ENCODE measurements at regions of chr19 and their contacts with region 1.

Region 1: GRCh38 chr19:11673608-11674041 is 65.1 kb downstream of the ZNF823 start:
- DNase-seq: peak; percentile 72 to 81 (median 76)
- ATAC-seq: peak; percentile 88 to 97 (median 95)
- H3K4me3 ChIP-seq: peak overlapping the region; percentile 31 to 76 (median 57)
- H3K27ac ChIP-seq: peak overlapping the region in 8 of 12 donors; percentile 2 to 53 (median 30)
- H3K4me1 ChIP-seq: peaks cover 0 to 13% (median 6%) of the 10 kb centered on the region in 12 donors
- H3K27me3 ChIP-seq: peaks cover 0 to 3% (median 0%) of the 10 kb centered on the region in 9 donors
- CTCF ChIP-seq: peak; percentile 70 to 93 (median 82)
- POLR2A ChIP-seq: no peak

Region 2: DNA sequence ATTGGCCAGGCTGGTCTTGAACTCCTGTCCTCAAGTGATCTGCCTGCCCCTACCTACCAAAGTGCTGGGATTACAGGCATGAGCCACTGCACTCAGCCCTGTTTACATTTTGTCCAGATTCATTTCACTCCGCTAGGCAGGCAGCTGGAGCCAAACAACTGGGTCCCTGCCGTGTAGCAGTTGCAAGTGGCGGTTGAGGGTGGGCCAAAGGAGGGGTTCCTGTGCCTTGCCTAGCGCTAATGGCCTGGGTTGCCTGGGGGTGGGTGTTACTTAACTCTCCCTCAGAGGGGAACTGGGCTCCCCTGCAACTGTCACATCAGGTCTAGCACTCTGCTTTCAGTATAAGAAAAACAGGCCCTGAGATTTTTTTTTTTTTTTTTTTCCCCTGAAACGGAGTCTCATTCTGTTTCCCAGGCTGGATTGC is 103.6 kb before region 1 on chr19:
- intact Hi-C with region 1: no loop called
- DNase-seq: no peak
- ATAC-seq: no peak
- H3K4me3 ChIP-seq: no peak overlapping the region
- H3K27ac ChIP-seq: no peak overlapping the region
- H3K4me1 ChIP-seq: peaks cover 0 to 5% (median 0%) of the 10 kb centered on the region in 12 donors
- H3K27me3 ChIP-seq: no peaks in the 10 kb centered on the region
- CTCF ChIP-seq: no peak
- POLR2A ChIP-seq: no peak

Region 3: GRCh38 chr19:11745869-11746268 is 72.2 kb after region 1 on chr19:
- intact Hi-C with region 1: no loop called
- DNase-seq: no peak
- ATAC-seq: no peak
- H3K4me3 ChIP-seq: no peak overlapping the region
- H3K27ac ChIP-seq: no peak overlapping the region
- H3K4me1 ChIP-seq: no peaks in the 10 kb centered on the region
- H3K27me3 ChIP-seq: no peaks in the 10 kb centered on the region
- CTCF ChIP-seq: no peak
- POLR2A ChIP-seq: no peak

Region 4: GRCh38 chr19:11781295-11782052 is 107.8 kb after region 1 on chr19:
- intact Hi-C with region 1: loop called in 7 of 10 experiments (anchors 2 to 10 kb)
- DNase-seq: no peak
- ATAC-seq: no peak
- H3K4me3 ChIP-seq: no peak overlapping the region
- H3K27ac ChIP-seq: no peak overlapping the region
- H3K4me1 ChIP-seq: no peaks in the 10 kb centered on the region
- H3K27me3 ChIP-seq: no peaks in the 10 kb centered on the region
- CTCF ChIP-seq: no peak
- POLR2A ChIP-seq: no peak

Region 5: GRCh38 chr19:11787536-11787935 is 113.9 kb after region 1 on chr19:
- intact Hi-C with region 1: loop called in 7 of 10 experiments (anchors 2 to 10 kb)
- DNase-seq: no peak
- ATAC-seq: no peak
- H3K4me3 ChIP-seq: no peak overlapping the region
- H3K27ac ChIP-seq: no peak overlapping the region
- H3K4me1 ChIP-seq: no peaks in the 10 kb centered on the region
- H3K27me3 ChIP-seq: no peaks in the 10 kb centered on the region
- CTCF ChIP-seq: no peak
- POLR2A ChIP-seq: no peak